Panc1 (cell line): ENCODE measurements at regions of chr6 and their contacts with region 1.

Region 1: GRCh38 chr6:110958329-110959192 is at the start of gene GTF3C6:
- DNase-seq: no peak
- ATAC-seq: peak; percentile 98
- H3K4me3 ChIP-seq: peak within 1 kb of the TSS; percentile 67 to 82
- H3K27ac ChIP-seq: peak within 1 kb of the TSS; percentile 99
- H3K4me1 ChIP-seq: peaks cover 4% of the 10 kb centered on the region
- H3K27me3 ChIP-seq: no peaks in the 10 kb centered on the region
- CTCF ChIP-seq: no peak
- total RNA-seq, gene GTF3C6: 146 TPM

Region 2: DNA sequence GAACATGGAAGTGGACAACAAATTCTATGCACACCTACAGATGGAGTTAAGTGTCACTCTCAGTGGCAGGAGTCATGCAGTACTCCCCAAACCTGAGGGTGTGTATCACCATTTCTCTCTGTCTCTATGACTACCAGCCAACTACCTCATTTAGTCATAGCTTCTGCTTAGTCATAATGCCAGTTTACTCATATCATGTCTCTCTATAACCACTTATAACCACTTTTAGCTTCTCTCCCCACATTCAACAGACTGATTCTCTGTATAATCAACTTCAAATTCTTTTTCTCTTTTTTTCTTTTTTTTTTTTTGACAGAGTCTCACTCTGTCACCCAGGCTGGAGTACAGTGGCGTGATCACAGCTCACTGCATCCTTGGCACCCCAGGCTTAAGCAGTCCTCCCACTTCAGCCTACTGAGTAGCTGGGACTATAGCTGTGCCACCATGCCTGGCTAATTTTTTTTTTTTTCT is 13.8 kb before region 1 on chr6:
- CTCF ChIA-PET with region 1: no interaction called
- POLR2A ChIA-PET with region 1: interaction called, 12 read pairs
- in situ Hi-C with region 1: no loop called
- intact Hi-C with region 1: no loop called
- DNase-seq: peak; percentile 96
- ATAC-seq: peak; percentile 94
- H3K4me3 ChIP-seq: no peak overlapping the region
- H3K27ac ChIP-seq: no peak overlapping the region
- H3K4me1 ChIP-seq: no peaks in the 10 kb centered on the region
- H3K27me3 ChIP-seq: no peaks in the 10 kb centered on the region
- CTCF ChIP-seq: no peak

Region 3: DNA sequence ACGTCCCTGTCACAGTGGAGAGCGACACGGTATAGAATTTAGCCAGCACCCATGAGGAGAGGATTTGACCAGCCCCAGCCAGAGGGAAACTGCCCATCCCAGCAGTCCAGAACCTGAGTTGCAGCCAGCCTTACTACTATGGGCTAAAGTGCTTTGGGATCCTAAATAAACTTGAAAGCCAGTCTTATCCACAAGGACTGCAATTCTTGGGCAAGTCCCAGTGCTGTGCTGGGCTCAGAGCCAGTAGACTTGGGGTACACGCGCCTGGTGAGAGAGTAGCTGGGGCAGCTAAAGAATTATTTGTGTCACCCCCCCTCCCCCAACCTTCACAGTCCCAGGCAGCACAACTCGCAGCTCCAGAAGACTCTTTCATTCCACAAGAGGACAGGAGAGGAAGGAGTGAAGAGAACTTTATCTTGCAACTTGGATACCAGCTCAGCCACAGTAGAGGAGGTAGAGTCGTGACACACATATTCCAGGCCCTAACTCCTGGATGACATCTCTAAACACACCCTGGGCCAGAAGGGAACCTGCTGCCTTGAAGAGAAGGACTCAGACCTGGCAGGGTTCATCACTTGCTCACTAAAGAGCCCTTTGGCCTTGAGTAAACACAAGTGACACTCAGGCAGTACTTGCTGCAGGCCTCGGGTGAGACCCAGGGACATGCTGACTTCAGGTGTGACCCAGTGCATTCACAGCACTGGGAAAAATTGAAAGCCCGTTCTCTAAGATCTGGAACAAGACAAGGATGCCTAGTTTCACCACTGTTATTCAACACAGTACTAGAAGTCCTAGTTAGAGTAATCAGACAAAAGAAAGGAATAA is 424.1 kb after region 1 on chr6:
- CTCF ChIA-PET with region 1: no interaction called
- POLR2A ChIA-PET with region 1: no interaction called
- in situ Hi-C with region 1: no loop called
- intact Hi-C with region 1: no loop called
- DNase-seq: no peak
- ATAC-seq: no peak
- H3K4me3 ChIP-seq: no peak overlapping the region
- H3K27ac ChIP-seq: no peak overlapping the region
- H3K4me1 ChIP-seq: no peaks in the 10 kb centered on the region
- H3K27me3 ChIP-seq: no peaks in the 10 kb centered on the region
- CTCF ChIP-seq: no peak